CD8-positive, alpha-beta T cell (primary cell): ENCODE measurements at regions of chr4 and their contacts with region 1.

Region 1: DNA sequence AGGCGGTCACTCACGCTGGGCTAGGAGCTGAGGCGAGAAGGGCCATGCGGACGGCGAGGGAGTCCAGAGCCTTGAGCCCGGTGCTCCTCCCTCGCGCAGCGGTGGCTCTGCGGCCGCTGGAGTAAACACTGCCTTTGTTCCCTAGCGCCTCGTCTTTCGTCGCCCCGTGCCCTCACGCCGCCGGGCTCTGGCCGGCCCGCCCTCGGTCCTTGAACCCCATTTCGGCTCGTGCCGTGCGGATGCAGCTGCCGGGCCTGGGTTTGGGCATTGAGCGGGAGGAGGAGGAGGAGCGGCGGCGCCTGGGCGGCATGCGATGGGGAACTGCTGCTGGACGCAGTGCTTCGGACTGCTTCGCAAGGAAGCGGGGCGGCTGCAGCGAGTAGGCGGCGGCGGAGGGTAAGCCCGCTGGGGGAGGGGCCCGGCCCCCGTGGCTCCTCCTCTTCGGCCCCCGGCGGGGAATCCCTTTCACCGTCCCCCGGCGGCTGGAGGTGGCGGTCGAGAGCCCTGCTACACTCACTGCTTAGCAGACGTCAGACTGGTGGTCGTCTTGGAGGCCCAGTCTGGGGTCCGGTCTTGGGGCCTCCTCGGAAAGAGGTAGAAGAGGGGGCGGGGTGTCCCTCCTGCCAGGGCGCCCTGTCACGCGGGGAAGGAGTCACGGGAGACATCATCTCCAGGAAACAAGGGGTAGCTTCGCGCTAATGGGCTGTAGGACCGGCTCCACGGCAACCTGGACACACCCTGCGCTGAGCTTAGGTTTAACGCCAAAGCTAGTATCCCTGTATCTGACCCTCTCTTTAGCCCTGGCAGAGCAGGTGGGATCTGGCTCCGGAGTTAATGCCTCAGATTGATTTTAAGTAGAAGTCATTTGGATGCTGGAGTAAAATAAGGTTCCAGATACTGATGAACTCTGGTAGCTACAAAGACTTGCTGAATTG is at the start of gene AP1AR:
- DNase-seq: peak; percentile 54 to 91 (median 77)
- ATAC-seq: peak; percentile 58
- H3K4me3 ChIP-seq: peak within 1 kb of the TSS; percentile 86 to 90
- H3K4me3 Mint-ChIP-seq: peak within 1 kb of the TSS; percentile 97
- H3K27ac ChIP-seq: peak within 1 kb of the TSS; percentile 97
- H3K27ac Mint-ChIP-seq: peak within 1 kb of the TSS; percentile 100
- H3K4me1 ChIP-seq: peaks cover 24% of the 10 kb centered on the region
- H3K4me1 Mint-ChIP-seq: peaks cover 47% of the 10 kb centered on the region
- H3K27me3 ChIP-seq: no peaks in the 10 kb centered on the region
- H3K27me3 Mint-ChIP-seq: peaks cover 1% of the 10 kb centered on the region
- CTCF ChIP-seq: no peak
- total RNA-seq, gene AP1AR: 3.8 to 5.2 TPM

Region 2: DNA sequence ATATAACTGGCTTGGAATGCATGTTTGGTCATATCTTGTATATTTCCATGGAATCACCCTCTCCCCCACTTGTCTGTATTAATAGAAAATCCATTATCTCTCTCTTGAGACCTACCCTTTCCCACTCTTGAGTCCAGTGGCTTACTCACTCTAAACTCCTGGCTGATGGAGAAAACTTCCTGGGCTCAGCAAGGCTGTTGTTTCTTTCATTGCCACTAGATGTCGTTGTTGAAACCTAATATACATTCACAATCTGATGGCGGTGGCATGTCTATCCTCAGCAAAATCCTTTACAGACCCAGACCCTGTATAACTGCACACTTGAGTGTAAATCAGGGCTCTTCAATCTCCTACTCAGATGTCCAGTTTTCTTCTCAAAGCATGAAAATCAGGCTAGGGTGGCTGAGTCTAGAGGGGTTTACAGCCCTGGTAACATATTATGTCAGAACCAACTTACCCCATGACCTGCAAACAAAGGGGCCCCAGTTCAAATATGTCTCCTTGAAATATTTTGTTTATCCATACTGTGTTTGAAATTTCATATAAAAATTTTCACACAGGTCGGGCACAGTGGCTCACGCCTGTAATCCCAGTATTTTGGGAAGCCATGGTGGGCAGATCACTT is 156.8 kb before region 1 on chr4:
- CTCF ChIA-PET with region 1: no interaction called
- POLR2A ChIA-PET with region 1: no interaction called
- intact Hi-C with region 1: loop called in 1 of 2 experiments (anchors 1 kb)
- DNase-seq: peak in 2 of 9 experiments; percentile 41 to 55
- ATAC-seq: peak; percentile 70
- H3K4me3 ChIP-seq: no peak overlapping the region
- H3K4me3 Mint-ChIP-seq: no peak overlapping the region
- H3K27ac ChIP-seq: no peak overlapping the region
- H3K27ac Mint-ChIP-seq: no peak overlapping the region
- H3K4me1 ChIP-seq: no peaks in the 10 kb centered on the region
- H3K4me1 Mint-ChIP-seq: no peaks in the 10 kb centered on the region
- H3K27me3 ChIP-seq: no peaks in the 10 kb centered on the region
- H3K27me3 Mint-ChIP-seq: peaks cover 2% of the 10 kb centered on the region
- CTCF ChIP-seq: peak; percentile 77

Region 3: GRCh38 chr4:112214390-112215264 is 17.4 kb before region 1 on chr4:
- CTCF ChIA-PET with region 1: interaction called, 63 read pairs
- POLR2A ChIA-PET with region 1: no interaction called
- intact Hi-C with region 1: loop called (anchors 1 to 2 kb)
- DNase-seq: peak in 2 of 9 experiments; percentile 36 to 54
- ATAC-seq: no peak
- H3K4me3 ChIP-seq: no peak overlapping the region
- H3K4me3 Mint-ChIP-seq: no peak overlapping the region
- H3K27ac ChIP-seq: no peak overlapping the region
- H3K27ac Mint-ChIP-seq: no peak overlapping the region
- H3K4me1 ChIP-seq: no peaks in the 10 kb centered on the region
- H3K4me1 Mint-ChIP-seq: no peaks in the 10 kb centered on the region
- H3K27me3 ChIP-seq: no peaks in the 10 kb centered on the region
- H3K27me3 Mint-ChIP-seq: no peaks in the 10 kb centered on the region
- CTCF ChIP-seq: peak; percentile 51

Region 4: DNA sequence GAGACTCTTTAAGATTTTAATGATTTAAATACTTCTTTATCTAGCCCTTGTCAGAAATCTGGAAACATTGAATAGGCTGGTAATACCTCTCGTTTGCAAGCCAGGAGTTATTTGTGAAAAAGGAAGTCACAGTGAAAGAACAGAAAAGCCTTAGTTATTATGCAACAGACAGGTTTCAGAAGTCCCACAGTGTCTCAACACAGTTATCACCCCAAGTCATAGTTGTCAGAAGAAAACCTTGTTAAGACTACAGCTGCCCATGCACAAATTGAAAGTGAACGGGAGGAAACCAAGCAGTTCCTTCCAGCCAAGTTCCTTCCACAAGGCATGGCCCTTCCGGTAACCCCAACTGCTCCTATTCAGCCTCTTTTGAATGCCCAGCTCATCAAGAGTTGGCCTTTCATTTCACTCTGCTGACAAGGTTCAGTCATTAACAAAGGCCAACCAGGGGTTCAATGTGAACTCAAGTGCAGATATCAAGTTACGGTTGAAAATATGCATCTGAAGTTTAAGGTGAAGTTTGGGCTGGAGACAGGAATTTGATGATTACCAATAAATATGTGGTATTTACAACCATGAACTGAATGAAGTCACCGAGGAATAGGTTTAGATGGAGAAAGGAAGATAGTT is 80.7 kb after region 1 on chr4:
- CTCF ChIA-PET with region 1: interaction called, 7 read pairs
- POLR2A ChIA-PET with region 1: no interaction called
- intact Hi-C with region 1: loop called in 1 of 2 experiments (anchors 1 kb)
- DNase-seq: no peak
- ATAC-seq: no peak
- H3K4me3 ChIP-seq: no peak overlapping the region
- H3K4me3 Mint-ChIP-seq: no peak overlapping the region
- H3K27ac ChIP-seq: no peak overlapping the region
- H3K27ac Mint-ChIP-seq: no peak overlapping the region
- H3K4me1 ChIP-seq: no peaks in the 10 kb centered on the region
- H3K4me1 Mint-ChIP-seq: peaks cover 18% of the 10 kb centered on the region
- H3K27me3 ChIP-seq: no peaks in the 10 kb centered on the region
- H3K27me3 Mint-ChIP-seq: no peaks in the 10 kb centered on the region
- CTCF ChIP-seq: no peak

Region 5: DNA sequence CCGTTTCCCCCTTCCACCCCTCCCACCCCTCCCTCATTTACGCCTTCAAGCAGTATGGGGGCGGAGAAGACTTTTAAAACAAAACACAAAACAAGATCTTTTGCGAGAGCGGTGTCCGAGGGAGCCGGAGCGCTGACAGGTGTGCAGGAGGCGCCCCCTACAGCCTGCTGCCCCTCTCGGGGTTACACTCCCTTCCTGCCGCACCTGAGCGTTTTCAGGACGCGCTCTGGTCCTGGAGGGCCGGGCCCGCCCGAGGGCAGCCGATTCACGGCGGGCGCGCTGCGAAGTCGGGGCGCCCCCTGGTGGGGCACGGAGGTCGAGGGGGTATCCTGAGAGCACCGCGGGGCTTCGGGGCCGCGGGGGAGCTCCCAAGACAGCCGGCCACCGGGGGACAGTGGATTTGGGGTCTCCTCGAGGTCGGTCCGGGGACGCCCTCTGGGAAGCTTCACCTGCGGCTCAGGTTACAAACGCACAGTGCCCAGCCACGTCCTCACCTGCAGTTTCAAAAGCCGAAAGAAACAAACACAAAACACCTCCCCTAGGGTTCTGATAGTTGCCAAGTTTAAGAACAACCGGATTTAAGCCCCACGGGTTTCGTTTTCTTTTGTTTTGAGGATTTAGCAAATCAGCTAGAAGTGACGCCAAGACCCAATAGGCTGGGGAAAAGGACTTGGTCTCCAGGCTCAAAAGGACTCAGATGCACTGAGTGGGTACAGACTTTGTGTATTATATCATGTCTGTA is 291.9 kb after region 1 on chr4:
- CTCF ChIA-PET with region 1: no interaction called
- POLR2A ChIA-PET with region 1: no interaction called
- intact Hi-C with region 1: loop called (anchors 5 kb)
- DNase-seq: peak; percentile 54 to 88 (median 73)
- ATAC-seq: peak; percentile 83
- H3K4me3 ChIP-seq: peak overlapping the region; percentile 31 to 42
- H3K4me3 Mint-ChIP-seq: peak overlapping the region; percentile 82
- H3K27ac ChIP-seq: no peak overlapping the region
- H3K27ac Mint-ChIP-seq: no peak overlapping the region
- H3K4me1 ChIP-seq: peaks cover 18% of the 10 kb centered on the region
- H3K4me1 Mint-ChIP-seq: peaks cover 33% of the 10 kb centered on the region
- H3K27me3 ChIP-seq: peaks cover 33 to 37% of the 10 kb centered on the region in 2 experiments
- H3K27me3 Mint-ChIP-seq: peaks cover 44% of the 10 kb centered on the region
- CTCF ChIP-seq: peak; percentile 76

Region 6: DNA sequence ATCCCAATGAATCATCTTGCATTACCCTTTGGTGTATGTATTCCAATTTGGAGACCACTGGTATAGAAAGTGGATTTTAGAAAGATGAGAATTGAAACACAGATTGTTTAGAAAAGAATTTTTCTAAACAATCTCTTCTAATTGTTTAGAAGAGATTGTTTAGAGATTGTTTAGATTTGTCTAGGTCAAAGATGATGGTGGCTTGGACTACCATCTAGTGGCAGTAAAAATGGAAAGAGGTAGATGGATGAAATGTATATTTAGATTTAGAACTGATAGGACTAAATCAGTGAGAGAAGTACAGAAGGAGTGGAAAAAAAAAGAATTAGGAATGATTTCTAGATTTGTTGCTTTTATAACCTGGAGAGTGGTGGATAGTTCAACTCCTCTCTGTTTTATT is 1676.8 kb after region 1 on chr4:
- CTCF ChIA-PET with region 1: no interaction called
- POLR2A ChIA-PET with region 1: no interaction called
- intact Hi-C with region 1: loop called in 1 of 2 experiments (anchors 5 kb)
- DNase-seq: peak in 2 of 9 experiments; percentile 29 to 47
- ATAC-seq: no peak
- H3K4me3 ChIP-seq: no peak overlapping the region
- H3K4me3 Mint-ChIP-seq: no peak overlapping the region
- H3K27ac ChIP-seq: no peak overlapping the region
- H3K27ac Mint-ChIP-seq: peak overlapping the region; percentile 2
- H3K4me1 ChIP-seq: peaks cover 26% of the 10 kb centered on the region
- H3K4me1 Mint-ChIP-seq: peaks cover 32% of the 10 kb centered on the region
- H3K27me3 ChIP-seq: no peaks in the 10 kb centered on the region
- H3K27me3 Mint-ChIP-seq: no peaks in the 10 kb centered on the region
- CTCF ChIP-seq: no peak